Activated naive CD8-positive, alpha-beta T cell treated with anti-CD3 and anti-CD28 coated beads, Interleukin-2, amount 10 ng/mL, durations not matched to agents 7 days and 5 days (primary cell): ENCODE measurements at regions of chr6 and their contacts with region 1.

Region 1: GRCh38 chr6:47420394-47421371 is 56.9 kb upstream of the CD2AP start:
- DNase-seq: no peak
- ATAC-seq: peak; percentile 74
- H3K4me3 Mint-ChIP-seq: peak overlapping the region; percentile 18
- H3K27ac Mint-ChIP-seq: peak overlapping the region; percentile 70
- H3K4me1 Mint-ChIP-seq: peaks cover 20% of the 10 kb centered on the region
- H3K27me3 Mint-ChIP-seq: peaks cover 3% of the 10 kb centered on the region

Region 2: DNA sequence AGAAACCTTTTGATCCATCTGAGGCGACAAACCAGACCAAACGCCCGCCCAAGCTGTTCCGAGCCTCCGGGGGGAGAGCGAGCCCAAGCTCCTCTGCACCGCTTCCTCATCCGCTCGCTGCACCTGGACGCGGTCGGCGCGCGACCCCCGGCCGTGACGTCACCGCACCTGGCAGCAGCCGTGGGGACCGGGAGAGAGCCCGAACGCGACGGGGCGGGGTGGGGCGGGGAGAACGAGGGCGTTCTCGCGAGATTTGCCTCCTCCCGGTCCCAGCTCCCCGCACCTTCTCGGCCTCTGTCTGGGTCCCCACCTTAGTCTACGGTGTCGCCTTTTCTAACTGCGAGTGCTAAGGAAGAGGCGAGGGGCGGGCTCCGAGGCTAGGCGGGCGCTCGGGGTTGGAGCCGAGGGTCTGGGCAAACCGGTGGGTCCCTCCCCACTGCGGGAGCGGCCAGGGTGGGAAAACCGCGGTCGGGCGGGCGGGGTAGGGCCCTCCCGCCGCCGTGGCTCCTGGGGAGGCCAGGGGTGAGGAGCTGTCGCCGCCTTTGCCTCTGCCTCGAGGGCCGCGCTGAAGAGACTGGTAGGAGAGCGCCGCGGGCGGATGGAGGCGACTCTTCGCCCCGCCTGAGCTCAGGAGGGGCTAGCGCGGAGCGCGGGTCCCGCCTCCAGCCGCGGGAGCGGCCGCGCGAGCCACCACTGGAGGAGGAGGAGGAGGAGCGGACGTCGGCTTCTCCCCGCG is 57.0 kb after region 1 on chr6 and contains the start of gene CD2AP:
- POLR2A ChIA-PET with region 1: interaction called, 101 read pairs
- DNase-seq: peak; percentile 94
- ATAC-seq: peak; percentile 86
- H3K4me3 Mint-ChIP-seq: peak within 1 kb of the TSS; percentile 100
- H3K27ac Mint-ChIP-seq: peak within 1 kb of the TSS; percentile 99
- H3K4me1 Mint-ChIP-seq: peaks cover 30% of the 10 kb centered on the region
- H3K27me3 Mint-ChIP-seq: no peaks in the 10 kb centered on the region
- total RNA-seq, gene CD2AP: 38.9 to 45.4 TPM